ENCODE measurements at regions of chr2 and their contacts with region 1.

Region 1: GRCh38 chr2:133844214-133844892 is 276.1 kb upstream of the NCKAP5 start:
- DNase-seq: peak; percentile 66
- H3K4me3 ChIP-seq: no peak overlapping the region
- H3K27ac ChIP-seq: no peak overlapping the region
- H3K4me1 ChIP-seq: peaks cover 33% of the 10 kb centered on the region
- H3K27me3 ChIP-seq: no peaks in the 10 kb centered on the region
- CTCF ChIP-seq: peak; percentile 77 to 87
- POLR2A ChIP-seq: no peak

Region 2: GRCh38 chr2:132267105-132267497 is 1577.3 kb before region 1 on chr2:
- CTCF ChIA-PET with region 1: interaction called, 3 read pairs
- POLR2A ChIA-PET with region 1: no interaction called
- dilution Hi-C with region 1: no loop called
- intact Hi-C with region 1: loop called (anchors 1 kb)
- DNase-seq: no peak
- H3K4me3 ChIP-seq: no peak overlapping the region
- H3K27ac ChIP-seq: no peak overlapping the region
- H3K4me1 ChIP-seq: peaks cover 4% of the 10 kb centered on the region
- H3K27me3 ChIP-seq: no peaks in the 10 kb centered on the region
- CTCF ChIP-seq: no peak
- POLR2A ChIP-seq: no peak

Region 3: DNA sequence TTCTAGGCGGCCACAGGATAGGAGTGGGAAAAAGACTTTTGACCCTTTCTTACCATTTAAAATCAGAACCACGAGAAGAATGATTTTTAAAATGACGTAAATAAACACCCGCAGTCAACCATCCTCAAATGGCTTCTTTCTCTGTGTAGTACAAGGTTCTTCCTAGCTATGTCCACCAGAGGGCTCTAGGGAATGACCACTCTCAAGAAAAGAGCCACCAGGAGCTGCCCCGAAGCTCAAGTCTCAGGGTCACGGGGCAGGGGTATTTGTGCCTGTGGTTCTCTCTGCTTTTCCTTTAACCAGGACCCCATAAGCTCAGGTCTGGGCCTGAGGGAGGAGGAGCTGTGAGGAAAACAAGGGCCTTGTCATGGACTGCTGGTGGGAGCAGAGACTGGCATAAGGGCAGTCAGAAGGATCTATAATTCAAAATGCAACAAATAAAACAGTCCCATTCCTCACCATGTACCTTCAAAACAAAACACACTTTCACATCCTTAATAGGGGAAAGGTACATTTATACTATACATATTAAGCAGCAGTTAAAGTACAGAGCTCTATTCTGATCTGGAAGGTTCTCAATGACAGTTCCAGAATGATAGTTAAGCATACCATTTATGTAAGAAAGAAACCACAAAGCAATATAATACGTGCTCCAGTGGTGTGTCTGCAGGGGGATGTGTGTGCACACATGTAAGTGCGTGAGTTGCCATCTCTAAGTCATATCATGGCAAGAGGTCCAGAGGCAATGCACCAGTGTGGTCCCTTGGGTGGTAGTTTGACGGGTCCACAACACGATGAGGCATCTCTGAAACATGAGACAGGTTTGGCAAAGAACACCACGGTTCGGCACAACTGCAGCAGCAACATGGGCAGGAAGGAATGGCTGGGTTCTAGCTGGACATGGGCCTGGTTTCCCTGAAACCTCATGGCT is 1193.0 kb before region 1 on chr2:
- CTCF ChIA-PET with region 1: interaction called, 14 read pairs
- POLR2A ChIA-PET with region 1: no interaction called
- dilution Hi-C with region 1: no loop called
- intact Hi-C with region 1: loop called (anchors 1 kb)
- DNase-seq: peak; percentile 73
- H3K4me3 ChIP-seq: no peak overlapping the region
- H3K27ac ChIP-seq: no peak overlapping the region
- H3K4me1 ChIP-seq: peaks cover 2% of the 10 kb centered on the region
- H3K27me3 ChIP-seq: no peaks in the 10 kb centered on the region
- CTCF ChIP-seq: peak; percentile 56 to 80
- POLR2A ChIP-seq: no peak

Region 4: GRCh38 chr2:133026536-133027177 is 817.7 kb before region 1 on chr2:
- CTCF ChIA-PET with region 1: no interaction called
- POLR2A ChIA-PET with region 1: no interaction called
- dilution Hi-C with region 1: no loop called
- intact Hi-C with region 1: no loop called
- DNase-seq: peak; percentile 3
- H3K4me3 ChIP-seq: no peak overlapping the region
- H3K27ac ChIP-seq: no peak overlapping the region
- H3K4me1 ChIP-seq: no peaks in the 10 kb centered on the region
- H3K27me3 ChIP-seq: no peaks in the 10 kb centered on the region
- CTCF ChIP-seq: no peak
- POLR2A ChIP-seq: no peak

Region 5: DNA sequence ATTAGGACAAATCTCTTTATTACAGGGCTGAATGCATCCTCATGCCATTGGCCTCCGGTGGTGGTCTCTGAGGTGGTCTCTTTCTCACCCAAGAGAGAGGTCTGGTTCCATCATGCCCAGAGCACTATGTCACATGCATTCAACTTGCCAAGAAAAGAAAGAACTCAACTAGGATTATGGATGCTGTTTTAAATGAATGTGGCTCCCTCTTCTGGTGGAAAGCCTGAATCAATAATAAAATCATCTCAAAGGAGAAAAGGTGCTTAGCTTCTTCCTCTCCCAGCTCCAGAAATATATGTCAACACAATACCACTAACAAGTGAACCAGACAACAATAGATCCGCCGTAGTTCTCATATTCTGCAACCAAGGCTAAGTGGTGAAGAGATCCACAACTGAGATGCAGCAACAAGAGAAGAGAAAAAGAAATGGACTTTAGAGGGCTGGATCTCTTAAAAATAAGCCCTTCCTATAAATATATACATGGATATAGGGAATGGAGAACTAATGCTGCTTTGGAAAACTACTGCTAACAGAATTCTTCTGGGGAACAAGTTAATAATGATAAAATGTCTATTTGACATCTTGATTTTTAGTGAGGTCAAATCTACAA is 672.9 kb before region 1 on chr2:
- CTCF ChIA-PET with region 1: interaction called, 53 read pairs
- POLR2A ChIA-PET with region 1: no interaction called
- dilution Hi-C with region 1: no loop called
- intact Hi-C with region 1: loop called (anchors 1 kb)
- DNase-seq: peak; percentile 79
- H3K4me3 ChIP-seq: no peak overlapping the region
- H3K27ac ChIP-seq: no peak overlapping the region
- H3K4me1 ChIP-seq: no peaks in the 10 kb centered on the region
- H3K27me3 ChIP-seq: peaks cover 2% of the 10 kb centered on the region in 2 experiments
- CTCF ChIP-seq: peak; percentile 48 to 58
- POLR2A ChIP-seq: no peak

Region 6: GRCh38 chr2:133266041-133266925 is 578.1 kb before region 1 on chr2:
- CTCF ChIA-PET with region 1: interaction called, 9 read pairs
- POLR2A ChIA-PET with region 1: no interaction called
- dilution Hi-C with region 1: no loop called
- intact Hi-C with region 1: loop called (anchors 2 kb)
- DNase-seq: peak; percentile 13
- H3K4me3 ChIP-seq: peak overlapping the region; percentile 21 to 57 (median 41)
- H3K27ac ChIP-seq: no peak overlapping the region
- H3K4me1 ChIP-seq: peaks cover 4% of the 10 kb centered on the region
- H3K27me3 ChIP-seq: no peaks in the 10 kb centered on the region
- CTCF ChIP-seq: no peak
- POLR2A ChIP-seq: no peak

Region 7: DNA sequence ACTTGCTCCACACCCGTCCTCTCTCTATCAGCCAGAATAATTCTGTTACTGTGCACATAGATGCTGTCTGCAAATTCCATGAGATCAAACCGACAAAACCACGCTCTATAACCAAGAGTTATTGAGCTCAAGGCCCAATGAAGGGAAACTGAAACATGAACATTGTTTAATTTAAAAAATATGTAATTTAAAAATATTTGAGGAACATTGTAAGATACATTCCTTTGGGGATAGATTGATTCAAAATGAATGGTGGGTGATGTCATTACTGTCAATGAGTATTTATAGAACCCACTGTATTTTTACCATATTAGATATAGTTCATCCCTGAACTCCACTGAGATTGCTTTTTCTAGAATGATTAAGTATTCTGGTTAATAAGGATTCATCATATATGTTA is 326.5 kb before region 1 on chr2:
- CTCF ChIA-PET with region 1: interaction called, 84 read pairs
- POLR2A ChIA-PET with region 1: no interaction called
- dilution Hi-C with region 1: no loop called
- intact Hi-C with region 1: loop called (anchors 1 kb)
- DNase-seq: no peak
- H3K4me3 ChIP-seq: no peak overlapping the region
- H3K27ac ChIP-seq: no peak overlapping the region
- H3K4me1 ChIP-seq: no peaks in the 10 kb centered on the region
- H3K27me3 ChIP-seq: peaks cover 0 to 1% of the 10 kb centered on the region in 2 experiments
- CTCF ChIP-seq: no peak
- POLR2A ChIP-seq: no peak

Region 8: GRCh38 chr2:133579274-133579673 is 265.1 kb before region 1 on chr2:
- CTCF ChIA-PET with region 1: interaction called, 13 read pairs
- POLR2A ChIA-PET with region 1: no interaction called
- dilution Hi-C with region 1: no loop called
- intact Hi-C with region 1: loop called (anchors 1 kb)
- DNase-seq: peak; percentile 93
- H3K4me3 ChIP-seq: no peak overlapping the region
- H3K27ac ChIP-seq: peak overlapping the region; percentile 45
- H3K4me1 ChIP-seq: peaks cover 40% of the 10 kb centered on the region
- H3K27me3 ChIP-seq: no peaks in the 10 kb centered on the region
- CTCF ChIP-seq: no peak
- POLR2A ChIP-seq: peak; percentile 27

Region 9: DNA sequence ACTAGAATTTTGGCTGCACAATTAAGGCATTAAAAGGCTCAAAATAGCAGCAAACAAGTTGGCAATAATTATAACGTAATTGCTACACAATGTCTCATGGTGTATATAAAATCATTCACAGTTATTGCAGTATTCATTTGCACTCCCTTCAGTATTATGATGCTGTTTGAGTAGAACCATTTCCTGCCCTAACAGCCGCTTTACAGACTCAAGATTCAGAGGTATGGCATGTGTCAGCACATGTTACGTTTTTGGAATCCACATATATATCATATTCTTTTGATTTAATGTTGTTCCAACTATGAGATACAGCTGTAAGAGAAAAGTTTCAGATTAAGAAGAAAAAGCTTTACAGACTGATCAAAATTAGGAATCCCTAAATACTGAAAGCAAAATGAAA is 219.8 kb before region 1 on chr2:
- CTCF ChIA-PET with region 1: no interaction called
- POLR2A ChIA-PET with region 1: no interaction called
- dilution Hi-C with region 1: no loop called
- intact Hi-C with region 1: no loop called
- DNase-seq: no peak
- H3K4me3 ChIP-seq: no peak overlapping the region
- H3K27ac ChIP-seq: no peak overlapping the region
- H3K4me1 ChIP-seq: no peaks in the 10 kb centered on the region
- H3K27me3 ChIP-seq: no peaks in the 10 kb centered on the region
- CTCF ChIP-seq: no peak
- POLR2A ChIP-seq: no peak

Region 10: GRCh38 chr2:133718688-133719201 is 125.6 kb before region 1 on chr2:
- CTCF ChIA-PET with region 1: no interaction called
- POLR2A ChIA-PET with region 1: no interaction called
- dilution Hi-C with region 1: no loop called
- intact Hi-C with region 1: no loop called
- DNase-seq: no peak
- H3K4me3 ChIP-seq: no peak overlapping the region
- H3K27ac ChIP-seq: no peak overlapping the region
- H3K4me1 ChIP-seq: no peaks in the 10 kb centered on the region
- H3K27me3 ChIP-seq: no peaks in the 10 kb centered on the region
- CTCF ChIP-seq: no peak
- POLR2A ChIP-seq: no peak

Region 11: DNA sequence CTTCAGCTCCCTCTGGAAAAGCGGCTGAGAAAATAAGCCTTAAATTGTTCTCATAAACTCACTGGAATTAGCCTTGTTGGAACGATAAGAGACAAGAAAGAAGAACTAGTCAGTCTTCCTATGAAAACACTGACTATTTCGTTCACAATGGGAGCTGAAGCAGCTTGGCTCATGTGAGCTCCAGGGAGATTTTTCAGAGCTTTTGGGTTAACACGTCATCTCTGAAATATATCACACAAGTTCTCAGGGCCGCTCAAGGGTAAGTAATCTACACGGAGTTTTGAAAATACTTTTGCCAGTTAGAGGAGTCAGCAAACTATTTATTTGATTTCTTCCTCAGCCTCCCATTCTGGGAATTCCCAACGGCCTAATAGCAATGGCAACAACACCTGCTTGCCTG is 93.3 kb after region 1 on chr2:
- CTCF ChIA-PET with region 1: no interaction called
- POLR2A ChIA-PET with region 1: no interaction called
- dilution Hi-C with region 1: no loop called
- intact Hi-C with region 1: no loop called
- DNase-seq: no peak
- H3K4me3 ChIP-seq: no peak overlapping the region
- H3K27ac ChIP-seq: no peak overlapping the region
- H3K4me1 ChIP-seq: no peaks in the 10 kb centered on the region
- H3K27me3 ChIP-seq: peaks cover 0 to 1% of the 10 kb centered on the region in 2 experiments
- CTCF ChIP-seq: no peak
- POLR2A ChIP-seq: no peak